ENCODE measurements at regions of chr1 and their contacts with region 1.

Region 1: GRCh38 chr1:109397538-109398342 is at the start of gene SORT1:
- DNase-seq: peak; percentile 54
- ATAC-seq: peak; percentile 93
- H3K4me3 Mint-ChIP-seq: peak within 1 kb of the TSS; percentile 83
- H3K27ac Mint-ChIP-seq: no peak within 1 kb of the TSS
- H3K4me1 Mint-ChIP-seq: peaks cover 19% of the 10 kb centered on the region
- H3K27me3 Mint-ChIP-seq: peaks cover 45% of the 10 kb centered on the region
- CTCF ChIP-seq: no peak
- total RNA-seq, gene SORT1: 0.20 and 0.37 TPM in 2 replicates

Region 2: GRCh38 chr1:109112652-109113285 is 285.0 kb before region 1 on chr1:
- CTCF ChIA-PET with region 1: no interaction called
- POLR2A ChIA-PET with region 1: no interaction called
- intact Hi-C with region 1: loop called (anchors 10 kb)
- DNase-seq: peak; percentile 83
- ATAC-seq: peak; percentile 75
- H3K4me3 Mint-ChIP-seq: peak overlapping the region; percentile 77
- H3K27ac Mint-ChIP-seq: peak overlapping the region; percentile 56
- H3K4me1 Mint-ChIP-seq: peaks cover 25% of the 10 kb centered on the region
- H3K27me3 Mint-ChIP-seq: peaks cover 27% of the 10 kb centered on the region
- CTCF ChIP-seq: peak; percentile 88

Region 3: GRCh38 chr1:109263597-109264398 is 133.9 kb before region 1 on chr1:
- CTCF ChIA-PET with region 1: interaction called, 25 read pairs
- POLR2A ChIA-PET with region 1: interaction called, 3 read pairs
- intact Hi-C with region 1: loop called (anchors 1 kb)
- DNase-seq: peak; percentile 63
- ATAC-seq: peak; percentile 97
- H3K4me3 Mint-ChIP-seq: no peak overlapping the region
- H3K27ac Mint-ChIP-seq: no peak overlapping the region
- H3K4me1 Mint-ChIP-seq: peaks cover 4% of the 10 kb centered on the region
- H3K27me3 Mint-ChIP-seq: peaks cover 2% of the 10 kb centered on the region
- CTCF ChIP-seq: no peak

Region 4: GRCh38 chr1:109282952-109283747 is 114.6 kb before region 1 on chr1 and contains the start of gene PSRC1:
- CTCF ChIA-PET with region 1: interaction called, 207 read pairs
- POLR2A ChIA-PET with region 1: interaction called, 4 read pairs
- intact Hi-C with region 1: loop called (anchors 1 kb)
- DNase-seq: peak; percentile 88
- ATAC-seq: peak; percentile 98
- H3K4me3 Mint-ChIP-seq: peak within 1 kb of the TSS; percentile 96
- H3K27ac Mint-ChIP-seq: peak within 1 kb of the TSS; percentile 91
- H3K4me1 Mint-ChIP-seq: peaks cover 13% of the 10 kb centered on the region
- H3K27me3 Mint-ChIP-seq: peaks cover 3% of the 10 kb centered on the region
- CTCF ChIP-seq: no peak
- total RNA-seq, gene PSRC1: 0.69 TPM in 1 of 2 replicates, not detected in the other

Region 5: DNA sequence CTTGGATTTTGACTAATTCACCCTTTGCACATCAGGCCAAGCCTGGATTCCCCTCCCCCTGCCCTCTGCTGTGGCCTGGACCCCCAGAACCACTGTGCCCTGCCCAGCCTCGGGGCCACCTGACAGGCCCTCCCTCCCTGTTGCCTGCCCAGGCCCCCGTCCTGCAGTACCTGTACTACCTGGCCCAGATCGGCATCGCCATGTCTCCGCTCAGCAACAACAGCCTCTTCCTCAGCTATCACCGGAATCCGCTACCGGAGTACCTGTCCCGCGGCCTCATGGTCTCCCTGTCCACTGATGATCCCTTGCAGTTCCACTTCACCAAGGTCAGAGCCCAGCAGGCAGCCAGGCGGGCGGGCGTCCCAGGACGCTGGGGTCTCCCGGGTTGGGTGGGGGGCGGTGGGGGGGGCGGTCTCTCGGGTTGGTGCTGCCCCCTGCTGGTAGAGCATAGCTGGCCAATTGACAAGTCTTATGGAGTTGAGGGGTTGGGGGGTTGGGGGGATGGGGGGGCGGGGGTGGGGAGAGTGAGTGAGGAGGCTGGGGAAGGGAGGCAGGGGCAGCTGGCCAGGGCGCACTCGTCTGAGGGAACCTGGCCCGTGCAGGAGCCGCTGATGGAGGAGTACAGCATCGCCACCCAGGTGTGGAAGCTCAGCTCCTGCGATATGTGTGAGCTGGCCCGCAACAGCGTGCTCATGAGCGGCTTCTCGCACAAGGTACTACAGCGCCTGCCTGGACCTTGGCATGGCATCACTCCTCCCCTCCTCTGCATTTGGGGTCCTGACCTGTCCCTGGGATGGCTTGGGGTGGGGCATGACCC is 232.5 kb after region 1 on chr1:
- CTCF ChIA-PET with region 1: no interaction called
- POLR2A ChIA-PET with region 1: interaction called, 10 read pairs
- intact Hi-C with region 1: no loop called
- DNase-seq: no peak
- ATAC-seq: no peak
- H3K4me3 Mint-ChIP-seq: no peak overlapping the region
- H3K27ac Mint-ChIP-seq: no peak overlapping the region
- H3K4me1 Mint-ChIP-seq: peaks cover 16% of the 10 kb centered on the region
- H3K27me3 Mint-ChIP-seq: no peaks in the 10 kb centered on the region
- CTCF ChIP-seq: no peak

Region 6: GRCh38 chr1:109773146-109773899 is 375.6 kb after region 1 on chr1:
- CTCF ChIA-PET with region 1: no interaction called
- POLR2A ChIA-PET with region 1: no interaction called
- intact Hi-C with region 1: no loop called
- DNase-seq: peak; percentile 37
- ATAC-seq: peak; percentile 81
- H3K4me3 Mint-ChIP-seq: no peak overlapping the region
- H3K27ac Mint-ChIP-seq: no peak overlapping the region
- H3K4me1 Mint-ChIP-seq: peaks cover 3% of the 10 kb centered on the region
- H3K27me3 Mint-ChIP-seq: peaks cover 12% of the 10 kb centered on the region
- CTCF ChIP-seq: no peak